ENCODE measurements at regions of chr9 and their contacts with region 1.

Region 1: DNA sequence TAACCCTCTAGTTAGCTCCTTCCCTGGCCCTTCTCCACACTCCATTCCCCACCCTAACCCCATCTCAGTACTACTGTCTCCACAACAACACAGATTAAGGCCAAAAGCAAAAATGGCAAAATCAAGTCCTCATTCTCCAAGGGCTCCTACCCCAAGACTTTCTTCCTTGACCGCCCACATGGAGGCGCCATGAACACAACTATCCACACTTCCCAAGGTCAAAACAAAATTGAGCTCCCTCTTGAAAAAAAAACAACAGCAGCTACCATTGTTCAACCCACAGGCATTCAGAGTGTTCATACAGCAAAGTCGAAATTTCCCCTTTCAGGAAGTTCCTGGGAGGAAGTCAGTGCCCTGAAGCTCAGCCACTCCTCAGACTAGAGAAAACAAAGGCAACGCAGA is 54.4 kb downstream of the GNAQ start:
- DNase-seq: peak; percentile 34
- H3K4me3 ChIP-seq: no peak overlapping the region
- H3K27ac ChIP-seq: no peak overlapping the region
- H3K4me1 ChIP-seq: no peaks in the 10 kb centered on the region
- CTCF ChIP-seq: peak; percentile 79

Region 2: GRCh38 chr9:77916410-77916819 is 60.8 kb before region 1 on chr9:
- CTCF ChIA-PET with region 1: no interaction called
- POLR2A ChIA-PET with region 1: no interaction called
- intact Hi-C with region 1: no loop called
- DNase-seq: no peak
- H3K4me3 ChIP-seq: no peak overlapping the region
- H3K27ac ChIP-seq: no peak overlapping the region
- H3K4me1 ChIP-seq: no peaks in the 10 kb centered on the region
- CTCF ChIP-seq: no peak

Region 3: DNA sequence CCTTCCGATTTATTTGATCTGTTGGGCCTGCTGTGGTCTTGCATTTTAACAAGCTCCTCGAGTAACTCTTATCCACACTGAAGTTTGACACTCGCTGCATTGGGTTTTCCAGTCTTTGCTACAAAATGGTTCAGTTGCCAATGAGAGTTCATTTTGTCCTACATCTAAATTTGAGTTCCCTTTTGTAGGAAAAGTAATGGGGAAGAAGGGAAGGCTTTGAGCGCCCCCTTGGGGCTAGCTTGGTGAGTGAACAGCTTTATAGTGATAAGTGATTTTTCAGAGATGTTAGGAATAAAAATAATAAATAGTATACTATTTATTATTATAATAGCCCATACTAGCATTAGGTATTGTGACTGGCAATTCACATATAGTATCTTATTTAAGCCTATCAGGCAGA is 144.3 kb after region 1 on chr9:
- CTCF ChIA-PET with region 1: no interaction called
- POLR2A ChIA-PET with region 1: no interaction called
- intact Hi-C with region 1: loop called (anchors 10 kb)
- DNase-seq: peak; percentile 36
- H3K4me3 ChIP-seq: no peak overlapping the region
- H3K27ac ChIP-seq: no peak overlapping the region
- H3K4me1 ChIP-seq: peaks cover 7% of the 10 kb centered on the region
- CTCF ChIP-seq: peak; percentile 83